ENCODE measurements at regions of chr4 and their contacts with region 1.

Region 1: DNA sequence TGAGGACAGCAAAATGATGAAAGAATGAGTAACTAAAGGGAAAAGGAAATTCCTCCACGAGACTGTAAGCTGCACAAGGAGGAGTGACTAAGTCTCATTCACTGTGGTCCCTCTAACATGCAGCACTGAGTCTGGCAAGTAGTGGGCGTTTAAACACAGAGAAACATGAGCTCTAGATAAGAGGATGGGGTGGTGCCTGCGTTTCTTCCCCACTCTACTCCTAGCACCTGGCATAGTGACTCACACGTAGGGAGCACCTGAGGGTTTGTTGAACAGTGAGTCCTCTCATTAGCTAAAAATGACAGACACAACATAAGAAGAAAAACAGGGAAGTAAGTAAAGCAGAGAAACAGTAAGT is 105.8 kb upstream of the CBR4 start:
- DNase-seq: peak; percentile 100
- H3K4me3 ChIP-seq: no peak overlapping the region
- H3K27ac ChIP-seq: peak overlapping the region; percentile 97
- H3K4me1 ChIP-seq: peaks cover 34% of the 10 kb centered on the region
- H3K27me3 ChIP-seq: no peaks in the 10 kb centered on the region
- CTCF ChIP-seq: peak; percentile 42 to 61

Region 2: DNA sequence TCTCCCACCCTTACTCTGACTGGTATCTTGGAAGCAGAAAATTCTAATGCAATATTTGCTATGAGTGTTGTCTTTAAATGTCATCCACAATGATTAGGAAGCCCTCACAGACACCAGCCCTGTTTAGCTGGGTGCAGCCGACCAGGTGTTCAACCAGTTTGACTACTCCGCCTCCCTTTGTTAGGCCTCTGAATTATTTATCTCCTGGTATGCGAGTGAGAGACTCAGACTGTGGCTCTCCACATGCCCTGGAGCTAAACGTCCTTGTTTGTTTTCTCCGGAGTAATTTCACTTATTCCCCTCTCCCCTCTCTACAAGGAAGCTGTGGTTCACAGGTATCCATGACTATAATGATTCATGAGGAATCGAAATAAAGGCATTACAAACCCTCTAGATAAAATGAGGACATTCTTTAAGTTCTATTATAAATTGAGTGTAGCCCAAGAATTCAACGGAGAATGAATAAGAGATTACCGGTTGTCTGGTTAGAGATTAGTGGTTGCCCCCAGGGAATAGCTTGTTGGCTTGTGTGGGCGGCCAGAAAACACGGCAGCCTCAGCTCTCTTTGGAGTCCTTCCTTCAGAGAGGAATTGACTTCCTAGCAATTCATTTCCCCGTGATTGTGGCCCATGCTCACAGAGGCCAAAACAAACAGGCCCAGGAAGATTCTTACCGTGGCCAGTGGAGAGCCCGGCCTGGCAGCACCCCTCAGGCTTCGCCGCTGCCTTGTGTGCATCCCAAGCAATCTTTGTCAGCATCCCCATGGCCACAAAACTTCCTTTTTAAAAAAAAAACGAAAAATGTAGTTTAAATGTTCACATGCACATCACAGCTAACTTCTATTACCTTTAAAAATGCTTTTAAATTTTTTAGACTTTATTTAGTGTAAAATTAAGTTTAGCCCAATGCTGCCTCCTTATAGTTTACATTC is 45.6 kb before region 1 on chr4:
- CTCF ChIA-PET with region 1: interaction called, 7 read pairs
- dilution Hi-C with region 1: no loop called
- in situ Hi-C with region 1: no loop called
- intact Hi-C with region 1: loop called (anchors 1 kb)
- DNase-seq: peak; percentile 99
- H3K4me3 ChIP-seq: peak overlapping the region; percentile 11 to 18 (median 12)
- H3K27ac ChIP-seq: peak overlapping the region; percentile 94
- H3K4me1 ChIP-seq: peaks cover 41% of the 10 kb centered on the region
- H3K27me3 ChIP-seq: no peaks in the 10 kb centered on the region
- CTCF ChIP-seq: no peak

Region 3: DNA sequence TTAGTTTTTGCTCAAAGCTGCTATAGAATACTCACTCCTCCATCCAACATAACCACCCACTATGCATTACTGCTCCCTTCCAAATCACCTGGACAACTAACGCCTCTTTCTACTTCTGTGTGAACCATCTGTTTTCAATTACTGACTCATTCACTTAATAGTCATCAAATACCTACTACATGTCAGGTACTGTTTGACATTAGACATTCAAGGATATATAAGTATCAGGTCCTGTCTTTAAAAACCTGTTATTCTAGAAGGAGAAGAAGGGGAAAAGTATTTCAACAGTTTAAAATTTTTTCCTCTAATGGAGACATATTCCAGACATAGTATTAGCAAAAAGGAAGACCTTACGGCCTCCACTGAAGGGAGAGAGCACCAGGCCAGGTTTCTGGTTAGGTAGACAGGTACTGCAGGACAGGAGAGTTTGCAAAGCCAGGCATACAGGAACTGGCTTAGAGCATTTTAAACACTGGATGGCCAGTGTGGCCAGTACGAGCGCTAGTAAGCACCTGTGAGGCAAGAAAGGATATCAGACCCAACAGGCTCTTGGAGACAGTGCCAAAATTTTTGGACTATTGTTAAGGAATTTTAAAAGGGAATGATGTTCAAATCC is 115.9 kb after region 1 on chr4:
- CTCF ChIA-PET with region 1: no interaction called
- dilution Hi-C with region 1: no loop called
- in situ Hi-C with region 1: no loop called
- intact Hi-C with region 1: loop called (anchors 1 kb)
- DNase-seq: peak; percentile 89
- H3K4me3 ChIP-seq: no peak overlapping the region
- H3K27ac ChIP-seq: peak overlapping the region; percentile 80
- H3K4me1 ChIP-seq: peaks cover 63% of the 10 kb centered on the region
- H3K27me3 ChIP-seq: no peaks in the 10 kb centered on the region
- CTCF ChIP-seq: no peak

Region 4: DNA sequence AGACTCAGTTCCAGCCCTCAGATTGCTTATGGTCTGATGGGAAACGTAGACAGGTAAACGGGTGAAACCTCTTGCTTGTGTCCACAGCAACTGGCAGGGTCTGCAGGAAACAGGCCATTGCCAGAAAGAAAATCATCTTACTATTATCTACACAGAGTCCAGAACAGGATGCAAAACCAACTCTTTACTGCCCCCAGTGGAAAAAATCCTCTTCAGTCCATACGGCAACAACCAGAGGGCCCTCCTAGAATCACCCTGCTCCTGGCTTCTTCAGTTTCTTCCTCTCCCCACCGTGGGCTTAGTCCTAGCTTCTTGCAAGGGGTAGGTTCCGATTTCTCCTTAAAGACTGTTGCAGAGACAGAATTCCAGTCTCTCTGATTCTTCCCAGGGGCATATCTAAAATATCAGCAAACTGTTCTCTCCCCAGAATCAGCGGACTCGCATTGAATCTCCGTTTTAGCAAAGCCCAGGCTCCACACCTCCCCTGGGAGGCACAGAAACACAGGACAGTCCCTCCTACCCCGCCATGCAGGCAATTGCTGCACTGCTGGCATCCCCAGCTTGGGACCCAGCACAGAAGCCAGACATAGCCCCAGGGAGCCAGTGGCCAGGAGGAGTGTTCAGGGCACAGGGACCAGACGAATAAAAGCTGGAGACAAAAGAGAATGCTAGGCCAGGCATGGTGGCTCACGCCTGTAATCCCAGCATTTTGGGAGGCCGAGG is 195.9 kb after region 1 on chr4:
- CTCF ChIA-PET with region 1: no interaction called
- dilution Hi-C with region 1: no loop called
- in situ Hi-C with region 1: no loop called
- intact Hi-C with region 1: loop called (anchors 2 kb)
- DNase-seq: peak; percentile 22
- H3K4me3 ChIP-seq: no peak overlapping the region
- H3K27ac ChIP-seq: no peak overlapping the region
- H3K4me1 ChIP-seq: peaks cover 23% of the 10 kb centered on the region
- H3K27me3 ChIP-seq: no peaks in the 10 kb centered on the region
- CTCF ChIP-seq: peak; percentile 36 to 39

Region 5: DNA sequence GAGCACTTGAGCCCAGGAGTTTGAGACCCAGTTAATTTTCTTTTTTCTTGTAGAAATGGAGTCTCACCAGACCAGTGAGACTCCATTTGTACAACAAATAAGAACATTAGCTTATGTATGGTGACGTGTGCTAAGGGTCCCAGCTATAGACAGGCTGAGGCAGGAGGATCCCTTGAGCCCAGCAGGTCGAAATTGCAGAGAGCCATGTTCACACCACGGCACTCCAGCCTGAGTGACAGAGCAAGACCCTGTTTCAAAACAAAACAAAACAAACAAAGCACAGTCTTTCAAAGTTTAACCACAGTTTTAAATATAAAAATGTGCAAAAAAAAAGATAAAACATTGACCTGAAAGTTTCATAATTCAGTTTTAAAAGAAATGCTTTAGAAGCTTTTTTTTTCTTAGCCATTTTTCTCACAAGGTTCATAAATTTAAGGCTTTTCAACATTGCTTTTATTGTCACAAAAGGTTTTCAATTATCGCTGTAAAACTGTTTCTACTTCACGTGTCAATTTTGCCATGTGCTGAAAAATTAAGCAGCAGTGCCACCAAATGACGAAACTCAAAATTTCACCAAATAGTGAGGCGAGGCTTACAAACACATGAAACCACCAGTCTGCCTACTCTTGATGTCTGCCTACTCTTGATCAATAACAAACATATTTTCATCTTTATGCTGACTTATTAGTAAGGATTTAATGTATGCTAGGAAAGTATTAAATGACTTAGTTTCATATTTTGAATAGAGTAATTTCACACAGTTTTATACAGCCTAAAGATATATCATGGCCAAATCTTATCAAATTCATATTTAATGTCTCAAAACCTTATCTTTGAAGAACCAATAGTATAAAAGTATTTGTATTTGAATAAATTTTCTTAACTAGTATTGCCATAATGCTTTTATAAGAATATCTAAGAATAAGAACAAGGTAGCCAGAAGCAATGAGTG is 370.2 kb after region 1 on chr4:
- CTCF ChIA-PET with region 1: no interaction called
- dilution Hi-C with region 1: no loop called
- in situ Hi-C with region 1: no loop called
- intact Hi-C with region 1: loop called (anchors 2 kb)
- DNase-seq: peak; percentile 50
- H3K4me3 ChIP-seq: no peak overlapping the region
- H3K27ac ChIP-seq: peak overlapping the region; percentile 15
- H3K4me1 ChIP-seq: peaks cover 4% of the 10 kb centered on the region
- H3K27me3 ChIP-seq: no peaks in the 10 kb centered on the region
- CTCF ChIP-seq: peak; percentile 43 to 54